ENCODE measurements at regions of chr3 and their contacts with region 1.

Region 1: GRCh38 chr3:150928234-150928633 is 23.0 kb upstream of the MINDY4B start:
- DNase-seq: no peak

Region 2: GRCh38 chr3:150890298-150891230 is 37.7 kb before region 1 on chr3:
- intact Hi-C with region 1: loop called in 1 of 2 experiments (anchors 2 kb)
- DNase-seq: no peak

Region 3: GRCh38 chr3:152638707-152639450 is 1710.6 kb after region 1 on chr3:
- intact Hi-C with region 1: no loop called
- DNase-seq: no peak

Measured in posterior vena cava (tissue), 2 donors.